Calu3 (cell line): ENCODE measurements at regions of chr19 and their contacts with region 1.

Region 1: DNA sequence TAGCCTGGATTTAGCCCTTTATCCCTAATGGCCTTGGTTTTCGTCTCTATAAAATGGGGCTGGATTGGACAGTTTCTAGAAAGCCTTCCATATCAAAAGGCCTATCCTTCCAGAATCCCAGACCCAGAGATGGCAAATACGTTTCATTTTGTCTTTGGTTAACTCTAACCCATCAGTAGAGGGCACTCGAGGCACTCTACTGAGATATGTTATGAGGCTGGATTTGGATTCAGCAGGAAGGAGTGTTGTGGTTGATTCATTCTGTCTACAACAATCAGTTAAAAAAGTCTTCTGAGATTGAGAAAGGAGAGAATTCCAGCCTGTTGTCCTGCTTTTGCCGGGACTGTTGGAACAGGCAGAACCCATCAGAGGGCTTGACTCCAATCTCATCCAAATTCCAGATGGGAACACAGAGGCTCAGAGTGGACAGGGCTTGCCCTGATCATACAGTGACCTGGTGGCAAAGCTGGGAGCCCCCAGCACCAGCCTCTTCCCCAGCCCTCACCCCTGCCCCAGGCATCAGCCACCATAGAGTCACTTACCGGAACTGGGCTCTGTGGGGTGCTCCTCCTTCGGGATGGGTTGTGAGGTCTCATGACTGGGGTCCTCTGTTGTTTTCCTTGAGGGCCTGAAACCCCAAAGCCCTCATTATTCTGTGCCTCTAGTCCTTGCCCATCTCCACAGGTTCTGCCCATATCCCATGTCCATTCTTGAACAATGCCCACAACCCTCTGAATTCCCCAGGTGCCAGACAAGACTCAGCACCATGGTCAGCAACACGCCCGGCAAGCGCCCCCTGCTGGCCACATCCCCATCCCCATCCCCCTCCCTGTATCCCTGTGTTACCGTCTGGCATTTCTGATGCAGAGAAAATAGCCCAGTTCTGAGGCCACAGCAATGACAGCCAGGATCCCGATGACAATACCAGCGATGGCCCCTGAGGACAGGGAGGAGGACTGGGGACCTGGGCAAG is 12.3 kb upstream of the ZNF180 start:
- DNase-seq: peak; percentile 81
- H3K4me3 Mint-ChIP-seq: no peak overlapping the region
- H3K27ac Mint-ChIP-seq: no peak overlapping the region
- H3K4me1 Mint-ChIP-seq: no peaks in the 10 kb centered on the region
- H3K27me3 Mint-ChIP-seq: peaks cover 39% of the 10 kb centered on the region
- CTCF ChIP-seq: peak; percentile 88

Region 2: GRCh38 chr19:44345959-44346358 is 166.7 kb before region 1 on chr19:
- CTCF ChIA-PET with region 1: no interaction called
- intact Hi-C with region 1: no loop called
- DNase-seq: no peak
- H3K4me3 Mint-ChIP-seq: no peak overlapping the region
- H3K27ac Mint-ChIP-seq: no peak overlapping the region
- H3K4me1 Mint-ChIP-seq: no peaks in the 10 kb centered on the region
- H3K27me3 Mint-ChIP-seq: no peaks in the 10 kb centered on the region
- CTCF ChIP-seq: no peak

Region 3: DNA sequence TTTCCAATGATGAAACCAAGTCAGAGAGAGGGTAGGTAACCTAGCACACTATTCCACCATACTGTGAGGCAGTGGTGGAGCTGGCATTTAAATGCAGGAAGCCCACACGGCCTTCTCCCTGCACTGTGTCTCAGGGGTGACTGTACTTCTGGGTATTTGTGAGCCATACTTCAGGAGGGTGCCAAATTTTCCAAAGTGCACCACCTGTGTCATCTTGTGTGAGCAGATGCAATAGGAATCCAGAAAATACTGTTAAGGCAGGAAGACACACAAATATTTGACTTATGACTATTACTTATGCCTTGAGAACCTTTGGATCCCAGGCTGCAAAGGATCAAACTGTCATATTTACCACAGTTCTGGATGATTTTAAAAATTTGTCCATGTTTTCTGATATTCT is 81.7 kb before region 1 on chr19:
- CTCF ChIA-PET with region 1: no interaction called
- intact Hi-C with region 1: no loop called
- DNase-seq: no peak
- H3K4me3 Mint-ChIP-seq: no peak overlapping the region
- H3K27ac Mint-ChIP-seq: no peak overlapping the region
- H3K4me1 Mint-ChIP-seq: no peaks in the 10 kb centered on the region
- H3K27me3 Mint-ChIP-seq: no peaks in the 10 kb centered on the region
- CTCF ChIP-seq: no peak

Region 4: DNA sequence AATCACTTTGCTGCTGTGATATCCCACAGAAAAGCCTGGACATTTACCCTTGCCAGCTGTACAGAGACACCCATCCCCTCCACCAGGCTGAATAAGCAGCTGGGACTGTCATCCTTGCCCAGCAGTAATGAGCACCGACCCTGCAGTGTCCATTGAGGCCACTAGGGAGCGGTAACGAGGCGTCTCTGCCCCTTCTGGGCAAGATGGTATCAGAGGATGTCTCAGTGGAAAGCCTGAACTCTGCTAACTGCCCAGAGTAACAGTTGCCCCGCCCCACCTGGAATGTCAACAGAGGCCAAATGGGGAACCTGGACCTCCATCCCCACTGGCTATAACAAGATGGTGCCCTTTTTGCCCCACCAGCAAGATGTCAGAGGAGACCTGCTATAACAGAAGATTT is 39.7 kb after region 1 on chr19:
- CTCF ChIA-PET with region 1: no interaction called
- intact Hi-C with region 1: loop called (anchors 2 kb)
- DNase-seq: peak; percentile 62
- H3K4me3 Mint-ChIP-seq: no peak overlapping the region
- H3K27ac Mint-ChIP-seq: no peak overlapping the region
- H3K4me1 Mint-ChIP-seq: peaks cover 21% of the 10 kb centered on the region
- H3K27me3 Mint-ChIP-seq: peaks cover 7% of the 10 kb centered on the region
- CTCF ChIP-seq: peak; percentile 50